PC-3 (cell line): ENCODE measurements at regions of chr3 and their contacts with region 1.

Region 1: GRCh38 chr3:39208463-39209055 is 16.2 kb upstream of the XIRP1 start:
- DNase-seq: peak; percentile 76
- ATAC-seq: peak; percentile 94
- H3K4me3 ChIP-seq: peak overlapping the region; percentile 29; the same call in 1 of the 2 replicates
- H3K27ac ChIP-seq: no peak overlapping the region
- H3K4me1 ChIP-seq: peaks cover 12% of the 10 kb centered on the region
- H3K27me3 ChIP-seq: peaks cover 25% of the 10 kb centered on the region
- CTCF ChIP-seq: peak; percentile 84

Region 2: GRCh38 chr3:39000008-39000450 is 208.5 kb before region 1 on chr3:
- CTCF ChIA-PET with region 1: no interaction called
- POLR2A ChIA-PET with region 1: no interaction called
- intact Hi-C with region 1: no loop called
- DNase-seq: peak; percentile 90
- ATAC-seq: peak; percentile 88
- H3K4me3 ChIP-seq: no peak overlapping the region
- H3K27ac ChIP-seq: no peak overlapping the region
- H3K4me1 ChIP-seq: no peaks in the 10 kb centered on the region; the same call in 1 of the 2 replicates
- H3K27me3 ChIP-seq: peaks cover 16% of the 10 kb centered on the region
- CTCF ChIP-seq: peak; percentile 99

Region 3: GRCh38 chr3:39166134-39166731 is 42.3 kb before region 1 on chr3:
- CTCF ChIA-PET with region 1: no interaction called
- POLR2A ChIA-PET with region 1: no interaction called
- intact Hi-C with region 1: no loop called
- DNase-seq: peak; percentile 82
- ATAC-seq: peak; percentile 90
- H3K4me3 ChIP-seq: no peak overlapping the region
- H3K27ac ChIP-seq: 0 out of 2 replicates have a peak overlapping the region, but pooled peaks have one; percentile 1
- H3K4me1 ChIP-seq: peaks cover 18% of the 10 kb centered on the region
- H3K27me3 ChIP-seq: no peaks in the 10 kb centered on the region
- CTCF ChIP-seq: no peak

Region 4: GRCh38 chr3:39189959-39190269 is 18.6 kb before region 1 on chr3:
- CTCF ChIA-PET with region 1: no interaction called
- POLR2A ChIA-PET with region 1: no interaction called
- intact Hi-C with region 1: loop called (anchors 2 kb)
- DNase-seq: peak; percentile 79
- ATAC-seq: peak; percentile 82
- H3K4me3 ChIP-seq: no peak overlapping the region
- H3K27ac ChIP-seq: no peak overlapping the region
- H3K4me1 ChIP-seq: no peaks in the 10 kb centered on the region
- H3K27me3 ChIP-seq: no peaks in the 10 kb centered on the region
- CTCF ChIP-seq: peak; percentile 88

Region 5: DNA sequence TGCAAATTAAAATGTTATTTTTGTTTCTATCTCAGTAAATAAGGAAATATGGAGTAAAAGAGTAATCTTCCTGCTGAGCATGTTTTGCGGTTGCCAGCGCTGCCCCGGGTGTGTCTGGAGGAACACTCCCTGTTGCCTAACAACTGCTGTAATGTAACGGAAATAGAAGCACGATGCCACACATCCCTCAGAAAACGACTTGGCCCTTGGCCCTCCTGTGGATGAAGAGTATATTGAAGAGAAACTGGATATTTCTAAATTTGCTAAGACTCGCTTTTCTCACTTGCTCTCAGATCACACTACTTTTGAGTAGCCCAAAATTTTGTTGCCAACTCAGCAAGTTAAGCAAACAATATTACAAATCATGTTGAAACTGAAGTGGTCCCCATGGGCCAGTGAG is 52.4 kb after region 1 on chr3:
- CTCF ChIA-PET with region 1: no interaction called
- POLR2A ChIA-PET with region 1: no interaction called
- intact Hi-C with region 1: loop called (anchors 1 kb)
- DNase-seq: peak; percentile 92
- ATAC-seq: peak; percentile 99
- H3K4me3 ChIP-seq: no peak overlapping the region
- H3K27ac ChIP-seq: no peak overlapping the region
- H3K4me1 ChIP-seq: peaks cover 13% of the 10 kb centered on the region; the same call in 1 of the 2 replicates
- H3K27me3 ChIP-seq: peaks cover 67% of the 10 kb centered on the region
- CTCF ChIP-seq: peak; percentile 63

Region 6: DNA sequence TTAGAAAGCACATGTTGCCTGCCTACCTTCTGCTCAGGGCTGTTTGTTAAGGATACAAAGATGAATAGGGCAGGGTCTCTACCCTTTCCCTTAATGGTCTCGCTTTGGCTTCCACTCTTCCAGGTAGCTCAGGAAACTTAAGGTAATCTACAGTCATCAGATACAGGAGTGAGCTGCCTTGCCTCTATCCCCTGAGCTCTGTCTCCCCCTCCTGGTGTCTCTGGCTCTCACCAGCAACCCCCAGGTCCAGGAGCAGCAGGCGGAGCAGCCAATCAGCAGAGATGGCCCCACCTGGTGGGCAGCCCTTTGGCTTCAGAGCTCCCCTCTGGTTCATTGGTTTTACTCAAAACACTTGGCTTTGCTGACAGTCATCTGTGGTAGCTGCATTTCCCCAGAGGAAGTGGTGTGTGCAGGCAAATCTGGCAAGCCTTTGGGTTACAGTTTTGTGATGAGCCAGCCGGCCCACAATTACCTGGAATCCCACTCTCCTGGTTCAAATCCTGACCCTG is 79.8 kb after region 1 on chr3:
- CTCF ChIA-PET with region 1: interaction called, 6 read pairs
- POLR2A ChIA-PET with region 1: no interaction called
- intact Hi-C with region 1: loop called (anchors 1 kb)
- DNase-seq: peak; percentile 89
- ATAC-seq: peak; percentile 93
- H3K4me3 ChIP-seq: no peak overlapping the region
- H3K27ac ChIP-seq: no peak overlapping the region
- H3K4me1 ChIP-seq: 0 out of 2 replicates have a peak, but pooled peaks cover 4% of the 10 kb centered on the region
- H3K27me3 ChIP-seq: no peaks in the 10 kb centered on the region
- CTCF ChIP-seq: peak; percentile 99

Region 7: GRCh38 chr3:39383045-39383880 is 174.7 kb after region 1 on chr3 and contains the start of gene SLC25A38:
- CTCF ChIA-PET with region 1: no interaction called
- POLR2A ChIA-PET with region 1: no interaction called
- intact Hi-C with region 1: loop called (anchors 5 kb)
- DNase-seq: peak; percentile 84
- ATAC-seq: peak; percentile 81
- H3K4me3 ChIP-seq: peak within 1 kb of the TSS; percentile 73
- H3K27ac ChIP-seq: peak within 1 kb of the TSS; percentile 66
- H3K4me1 ChIP-seq: peaks cover 23% of the 10 kb centered on the region
- H3K27me3 ChIP-seq: no peaks in the 10 kb centered on the region
- CTCF ChIP-seq: peak; percentile 28; the same call in 1 of the 2 replicates
- total RNA-seq, gene SLC25A38: 29.7 and 32.0 TPM in 2 replicates

Region 8: DNA sequence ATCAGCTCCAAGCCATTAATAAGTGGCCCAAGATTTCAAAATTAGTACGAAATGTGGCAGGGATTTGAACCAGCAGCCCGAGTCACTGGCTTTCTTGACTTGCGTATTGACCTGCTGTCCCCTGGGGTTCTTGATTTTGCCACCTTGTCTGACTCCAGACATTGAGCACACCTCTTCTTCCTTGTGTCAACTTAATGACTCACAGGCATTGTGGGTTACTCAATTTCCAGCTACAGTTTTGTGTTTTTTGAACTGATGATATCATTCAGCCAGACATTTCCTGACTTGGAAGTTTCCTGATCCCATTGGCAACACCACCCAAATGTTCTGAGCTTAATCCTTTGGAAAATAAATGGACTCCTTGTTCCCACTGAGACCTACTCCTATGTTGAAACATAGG is 323.1 kb after region 1 on chr3:
- CTCF ChIA-PET with region 1: no interaction called
- POLR2A ChIA-PET with region 1: interaction called, 14 read pairs
- intact Hi-C with region 1: no loop called
- DNase-seq: peak; percentile 51
- ATAC-seq: no peak
- H3K4me3 ChIP-seq: no peak overlapping the region
- H3K27ac ChIP-seq: no peak overlapping the region
- H3K4me1 ChIP-seq: no peaks in the 10 kb centered on the region
- H3K27me3 ChIP-seq: peaks cover 18% of the 10 kb centered on the region
- CTCF ChIP-seq: no peak